ENCODE measurements at regions of chr11 and their contacts with region 1.

Region 1: GRCh38 chr11:60345489-60345888 is 18.4 kb downstream of the MS4A6E start:
- DNase-seq: no peak
- CTCF ChIP-seq: peak; percentile 54

Region 2: DNA sequence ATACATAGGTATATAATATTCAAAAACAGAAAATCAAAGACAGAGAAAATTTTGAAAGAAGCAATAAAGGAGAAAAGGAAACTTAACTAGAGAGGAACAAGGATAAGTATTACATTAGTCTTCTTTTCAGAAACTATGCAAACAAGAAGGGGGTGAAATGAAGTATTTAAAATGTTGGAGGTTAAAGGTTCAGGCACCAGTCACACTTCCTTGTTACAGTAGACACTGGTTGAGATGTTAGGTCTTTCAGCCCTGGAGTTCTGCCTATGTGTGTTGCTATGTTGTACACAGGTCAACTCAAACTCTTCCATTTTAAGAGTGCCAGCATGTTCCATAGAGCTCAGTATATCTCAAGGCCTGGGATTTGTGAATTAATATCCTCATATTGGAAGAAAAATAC is 71.1 kb before region 1 on chr11:
- in situ Hi-C with region 1: loop called (anchors 10 kb)
- DNase-seq: no peak
- CTCF ChIP-seq: no peak

Region 3: GRCh38 chr11:60786811-60787567 is 441.5 kb after region 1 on chr11:
- in situ Hi-C with region 1: no loop called
- DNase-seq: no peak
- CTCF ChIP-seq: no peak